ENCODE measurements at regions of chr1 and their contacts with region 1.

Region 1: GRCh38 chr1:155044812-155045690 is 6.1 kb upstream of the ADAM15 start:
- DNase-seq: peak; percentile 87
- ATAC-seq: peak; percentile 98
- H3K4me3 ChIP-seq: no peak overlapping the region
- H3K27ac ChIP-seq: no peak overlapping the region
- H3K4me1 ChIP-seq: peaks cover 25% of the 10 kb centered on the region
- H3K27me3 ChIP-seq: no peaks in the 10 kb centered on the region
- CTCF ChIP-seq: peak; percentile 94

Region 2: DNA sequence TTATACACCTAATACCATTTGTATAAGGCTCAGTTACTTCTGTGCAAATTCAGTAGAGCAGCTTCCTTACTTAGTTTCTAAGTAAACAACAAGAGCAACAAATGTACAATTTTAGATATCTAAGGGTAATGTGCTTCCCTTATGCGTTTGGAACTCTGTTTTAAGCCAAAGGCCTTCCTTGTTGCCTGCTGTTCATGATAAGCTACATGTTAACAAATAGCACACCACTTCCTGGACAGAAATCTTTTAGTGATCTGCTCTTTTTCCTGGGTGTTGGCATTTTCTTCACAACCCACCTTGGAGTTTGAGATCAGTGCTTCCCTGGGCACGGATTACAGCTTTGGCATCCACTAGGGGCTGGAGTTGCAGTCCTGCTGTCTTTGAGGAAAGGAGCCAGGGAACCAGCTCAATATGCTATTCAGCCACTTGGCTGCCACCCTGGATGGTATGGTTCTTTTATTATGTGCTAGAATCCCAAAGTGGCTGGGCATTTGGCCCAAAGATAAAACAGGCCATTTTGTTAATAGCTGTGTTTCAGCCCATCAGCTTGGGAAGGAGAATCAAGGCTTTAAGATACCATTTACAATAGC is 381.5 kb before region 1 on chr1:
- CTCF ChIA-PET with region 1: no interaction called
- POLR2A ChIA-PET with region 1: no interaction called
- intact Hi-C with region 1: no loop called
- DNase-seq: no peak
- ATAC-seq: peak; percentile 63
- H3K4me3 ChIP-seq: no peak overlapping the region
- H3K27ac ChIP-seq: no peak overlapping the region
- H3K4me1 ChIP-seq: no peaks in the 10 kb centered on the region
- H3K27me3 ChIP-seq: peaks cover 29% of the 10 kb centered on the region
- CTCF ChIP-seq: peak; percentile 20; the same call in 1 of the 2 replicates

Region 3: DNA sequence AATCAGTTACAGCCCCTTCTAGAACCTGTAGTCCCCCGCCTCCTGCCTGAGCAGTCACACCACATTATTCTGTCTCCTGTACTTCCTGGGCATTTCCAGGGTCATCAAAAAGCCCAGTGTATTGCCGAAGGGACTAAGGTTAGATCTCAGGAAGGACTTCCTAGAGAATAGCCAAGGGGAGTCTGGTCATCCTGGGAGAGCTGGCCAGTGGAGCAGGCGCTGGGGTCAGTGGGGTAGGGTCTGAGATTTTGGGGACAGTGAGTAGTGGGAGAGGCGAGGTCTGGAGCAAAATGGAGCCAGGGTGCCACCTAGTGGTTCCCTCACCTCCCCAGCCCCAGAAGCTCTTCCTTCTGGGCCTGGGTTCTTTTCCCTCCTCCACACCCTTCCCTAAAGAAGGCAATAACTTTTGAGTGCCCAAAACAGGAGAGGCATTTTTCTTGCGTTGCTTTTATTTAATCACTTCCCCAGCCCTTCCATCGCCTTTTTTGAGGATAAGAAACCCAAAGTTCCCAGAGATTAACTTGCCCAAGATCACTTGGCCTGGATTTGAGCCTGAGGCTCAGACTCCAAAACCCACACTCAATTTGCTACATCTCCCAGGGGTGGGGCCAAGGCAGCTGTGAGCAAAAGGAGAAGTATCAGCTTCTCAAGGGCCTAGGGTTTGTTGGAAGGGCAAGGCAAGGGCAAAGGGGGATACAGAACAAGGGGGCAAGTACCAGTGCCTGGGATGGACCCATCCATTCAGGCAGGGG is 101.2 kb before region 1 on chr1:
- CTCF ChIA-PET with region 1: no interaction called
- POLR2A ChIA-PET with region 1: no interaction called
- intact Hi-C with region 1: no loop called
- DNase-seq: peak; percentile 64
- ATAC-seq: peak; percentile 83
- H3K4me3 ChIP-seq: no peak overlapping the region
- H3K27ac ChIP-seq: no peak overlapping the region
- H3K4me1 ChIP-seq: peaks cover 7% of the 10 kb centered on the region
- H3K27me3 ChIP-seq: no peaks in the 10 kb centered on the region
- CTCF ChIP-seq: peak; percentile 97

Region 4: DNA sequence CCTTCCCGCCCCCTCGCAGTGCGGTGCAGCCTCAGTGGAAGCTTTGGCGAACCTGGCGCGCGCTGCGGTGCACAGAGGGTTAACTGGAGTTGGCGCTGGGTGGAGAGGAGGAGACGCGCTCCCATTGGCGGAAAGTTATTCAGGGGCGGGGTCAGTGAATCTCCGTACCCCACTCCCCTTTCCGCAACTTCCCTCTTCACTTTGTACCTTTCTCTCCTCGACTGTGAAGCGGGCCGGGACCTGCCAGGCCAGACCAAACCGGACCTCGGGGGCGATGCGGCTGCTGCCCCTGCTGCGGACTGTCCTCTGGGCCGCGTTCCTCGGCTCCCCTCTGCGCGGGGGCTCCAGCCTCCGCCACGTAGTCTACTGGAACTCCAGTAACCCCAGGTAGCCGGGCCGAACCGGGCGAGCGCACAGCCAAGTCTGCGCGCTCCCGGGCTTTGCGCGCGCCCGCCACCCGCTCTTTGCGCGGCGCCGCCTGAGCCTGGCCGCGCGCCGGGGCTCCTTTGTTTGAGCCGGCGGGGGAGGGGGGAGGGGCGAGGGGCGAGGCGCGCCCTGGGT is 18.6 kb after region 1 on chr1 and contains the start of gene EFNA4:
- CTCF ChIA-PET with region 1: interaction called, 9 read pairs
- POLR2A ChIA-PET with region 1: no interaction called
- intact Hi-C with region 1: loop called (anchors 2 kb)
- DNase-seq: peak; percentile 90
- ATAC-seq: peak; percentile 76
- H3K4me3 ChIP-seq: peak within 1 kb of the TSS; percentile 76
- H3K27ac ChIP-seq: 0 out of 2 replicates have a peak within 1 kb of the TSS, but pooled peaks have one; percentile 3
- H3K4me1 ChIP-seq: peaks cover 21% of the 10 kb centered on the region
- H3K27me3 ChIP-seq: no peaks in the 10 kb centered on the region
- CTCF ChIP-seq: no peak
- total RNA-seq, gene EFNA4: 36.7 and 37.4 TPM in 2 replicates